Naive thymus-derived CD8-positive, alpha-beta T cell (primary cell): ENCODE measurements at regions of chr19 and their contacts with region 1.

Region 1: GRCh38 chr19:45001087-45001739 is at the start of gene RELB:
- DNase-seq: peak; percentile 90 to 99 (median 96)
- ATAC-seq: peak; percentile 71 to 73
- H3K4me3 Mint-ChIP-seq: peak within 1 kb of the TSS; percentile 89 to 100 (median 97)
- H3K27ac Mint-ChIP-seq: peak within 1 kb of the TSS; percentile 95 to 100 (median 100)
- H3K4me1 Mint-ChIP-seq: peaks cover 6 to 28% (median 12%) of the 10 kb centered on the region in 4 donors
- H3K27me3 Mint-ChIP-seq: peaks cover 0 to 2% (median 0%) of the 10 kb centered on the region in 5 donors
- polyA plus RNA-seq, gene RELB: 6.7 to 17.2 (median 8.3) TPM

Region 2: GRCh38 chr19:44643605-44644401 is 357.4 kb before region 1 on chr19 and contains the start of gene PVR:
- POLR2A ChIA-PET with region 1: no interaction called
- DNase-seq: peak in 4 of 10 donors; percentile 11 to 32 (median 28)
- ATAC-seq: peak; percentile 76 to 89
- H3K4me3 Mint-ChIP-seq: peak within 1 kb of the TSS; percentile 72 to 88 (median 78)
- H3K27ac Mint-ChIP-seq: peak within 1 kb of the TSS in 4 of 10 donors; percentile 35 to 76 (median 49)
- H3K4me1 Mint-ChIP-seq: peaks cover 0 to 10% (median 5%) of the 10 kb centered on the region in 4 donors
- H3K27me3 Mint-ChIP-seq: peaks cover 0 to 15% (median 3%) of the 10 kb centered on the region in 5 donors
- polyA plus RNA-seq, gene PVR: 0.11 to 1.4 (median 0.37) TPM

Region 3: DNA sequence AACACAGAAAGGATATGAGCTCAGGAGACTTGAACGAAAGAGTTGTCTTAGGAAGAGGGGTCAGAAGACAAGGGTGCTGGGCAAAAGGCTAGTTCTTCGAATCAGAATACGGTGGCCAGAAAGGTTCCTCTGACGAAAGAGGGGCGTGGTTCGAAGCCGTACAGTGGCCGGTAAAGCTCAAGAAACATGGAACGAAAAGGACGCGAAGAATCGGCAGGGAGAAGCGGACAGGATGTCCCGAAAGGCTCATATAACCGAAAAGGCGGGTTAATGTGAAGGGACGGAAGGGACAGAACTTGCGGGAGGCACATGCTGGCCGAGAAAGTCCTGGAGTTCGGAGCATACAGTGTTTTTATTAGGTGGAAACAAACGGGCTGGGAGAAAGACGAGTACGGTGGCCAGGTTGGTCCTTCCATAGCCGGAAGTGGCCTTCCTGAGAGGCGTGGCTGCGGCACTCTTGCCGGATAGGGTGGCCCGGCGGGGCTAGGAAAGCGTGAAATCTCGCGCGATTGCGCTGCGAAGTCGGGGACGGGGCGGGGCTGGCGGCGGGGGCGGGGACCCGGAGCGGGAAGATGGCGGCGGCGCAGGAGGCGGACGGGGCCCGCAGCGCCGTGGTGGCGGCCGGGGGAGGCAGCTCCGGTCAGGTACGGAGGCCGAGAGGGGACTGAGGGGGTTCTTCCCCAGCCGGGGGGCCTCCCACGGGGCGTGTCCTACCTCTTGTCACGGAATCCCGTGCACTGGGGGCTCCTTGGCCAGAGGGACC is 46.2 kb before region 1 on chr19 and contains the start of gene CLPTM1:
- POLR2A ChIA-PET with region 1: interaction called, 16 read pairs
- DNase-seq: peak; percentile 93 to 98 (median 96)
- ATAC-seq: peak; percentile 91 to 95
- H3K4me3 Mint-ChIP-seq: peak within 1 kb of the TSS; percentile 94 to 100 (median 97)
- H3K27ac Mint-ChIP-seq: peak within 1 kb of the TSS; percentile 94 to 99 (median 98)
- H3K4me1 Mint-ChIP-seq: peaks cover 27 to 60% (median 48%) of the 10 kb centered on the region in 4 donors
- H3K27me3 Mint-ChIP-seq: no peaks in the 10 kb centered on the region
- polyA plus RNA-seq, gene CLPTM1: 13.2 to 20.6 (median 14.9) TPM

Region 4: DNA sequence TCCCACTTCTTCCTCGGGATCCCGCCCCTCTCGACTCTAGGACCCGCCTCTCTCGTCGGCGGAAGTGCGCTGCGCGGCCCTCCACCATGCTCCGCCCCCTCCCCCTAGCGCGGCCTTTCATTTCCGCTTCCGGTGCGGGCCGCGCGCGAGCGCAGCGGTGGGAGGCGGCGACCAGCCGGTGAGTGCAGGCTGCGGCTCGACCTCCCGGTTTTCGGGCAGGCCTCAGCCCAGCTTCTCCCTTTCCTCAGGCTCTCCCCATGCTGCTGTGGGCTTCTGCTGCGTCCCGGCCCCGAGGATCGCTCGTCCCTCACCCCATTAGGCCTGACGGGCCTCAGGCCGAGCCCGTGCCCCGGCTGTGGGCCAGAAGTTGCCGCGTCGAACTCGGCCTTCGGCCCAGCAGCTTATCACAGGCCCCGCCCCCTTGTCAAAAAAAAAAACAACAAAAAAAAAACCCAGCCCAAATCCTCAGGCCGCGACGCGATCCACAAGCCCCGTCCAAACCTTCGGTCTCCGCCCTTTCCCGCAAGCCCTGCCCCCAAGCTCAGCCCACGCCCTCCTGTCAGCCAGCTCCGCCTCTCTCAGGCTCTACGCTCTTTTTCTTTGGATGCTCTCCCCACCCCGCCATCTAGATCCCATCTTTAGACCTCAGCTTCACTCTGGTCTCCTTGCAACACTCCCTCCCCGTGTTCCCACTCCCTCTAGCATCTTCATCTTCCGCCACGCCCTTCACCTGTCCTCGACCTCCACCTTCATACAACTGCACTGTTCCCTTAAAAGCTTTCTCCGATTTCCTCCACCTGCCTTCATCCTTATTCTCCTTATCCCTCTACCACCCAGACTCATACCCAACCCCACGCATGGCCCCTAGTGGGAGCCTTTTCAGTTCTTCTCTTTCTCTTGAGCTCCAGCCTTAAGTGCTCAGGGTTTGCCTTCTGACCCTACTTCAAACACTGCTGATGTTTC is 38.0 kb after region 1 on chr19 and contains the start of gene CLASRP:
- POLR2A ChIA-PET with region 1: interaction called, 17 read pairs
- DNase-seq: peak; percentile 79 to 90 (median 86)
- ATAC-seq: peak; percentile 91 to 95
- H3K4me3 Mint-ChIP-seq: peak within 1 kb of the TSS; percentile 93 to 99 (median 97)
- H3K27ac Mint-ChIP-seq: peak within 1 kb of the TSS; percentile 87 to 99 (median 96)
- H3K4me1 Mint-ChIP-seq: peaks cover 19 to 45% (median 39%) of the 10 kb centered on the region in 4 donors
- H3K27me3 Mint-ChIP-seq: no peaks in the 10 kb centered on the region
- polyA plus RNA-seq, gene CLASRP: 2.0 to 6.7 (median 5.3) TPM